CD4-positive, alpha-beta memory T cell (primary cell): ENCODE measurements at regions of chr20 and their contacts with region 1.

Region 1: DNA sequence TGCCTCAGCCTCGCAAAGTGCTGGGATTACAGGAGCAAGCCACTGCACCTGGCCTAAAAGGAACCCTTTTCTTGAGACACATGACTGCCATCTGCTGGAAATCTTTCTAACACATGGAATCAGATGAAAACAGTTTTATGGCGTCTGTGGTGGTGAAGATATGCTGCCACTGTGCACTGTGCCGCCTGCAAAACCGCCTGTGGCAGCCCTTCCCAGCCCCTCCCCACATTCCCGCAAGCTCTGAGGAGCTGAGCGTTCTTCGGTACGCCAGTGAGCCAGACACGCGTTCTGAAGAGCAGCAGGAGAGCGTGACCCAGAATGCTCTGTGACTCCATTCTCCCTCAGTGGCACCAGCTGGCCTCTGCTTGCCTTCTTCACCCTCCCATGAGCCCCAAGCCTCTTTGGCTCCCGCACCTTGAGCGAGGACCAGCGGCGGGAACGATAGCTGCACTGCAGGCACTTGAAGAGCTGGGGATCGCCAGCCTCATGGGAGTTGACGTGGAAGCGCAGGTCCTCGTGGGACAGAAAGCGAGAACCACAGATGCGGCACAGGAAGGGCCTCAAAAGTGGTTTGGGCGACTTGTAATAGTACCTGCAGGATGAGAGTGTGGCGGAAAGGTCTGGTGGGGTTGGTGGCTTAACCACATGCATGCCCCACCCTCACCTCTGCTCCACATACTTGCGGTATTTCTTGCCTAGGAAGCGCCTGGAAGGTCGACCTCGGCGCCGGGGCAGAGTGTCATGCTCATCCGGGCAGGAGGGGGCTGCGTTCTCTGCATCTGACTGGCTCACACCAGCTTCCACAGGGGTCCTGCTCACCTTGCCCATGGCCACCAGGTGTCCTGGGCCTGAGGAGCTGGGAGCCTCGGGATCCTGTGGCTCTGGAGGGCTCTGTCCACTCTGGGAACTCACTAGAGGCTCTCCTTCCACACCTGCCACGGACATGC is 8.7 kb downstream of the ZNF335 start:
- DNase-seq: peak in 4 of 5 donors; percentile 33 to 51 (median 36)
- H3K4me3 ChIP-seq: no peak overlapping the region
- H3K4me3 Mint-ChIP-seq: peak overlapping the region in 4 of 8 donors; percentile 56 to 64 (median 60)
- H3K27ac ChIP-seq: no peak overlapping the region
- H3K27ac Mint-ChIP-seq: peak overlapping the region; percentile 53 to 87 (median 61)
- H3K4me1 ChIP-seq: no peaks in the 10 kb centered on the region
- H3K4me1 Mint-ChIP-seq: peaks cover 0 to 11% (median 4%) of the 10 kb centered on the region in 4 donors
- H3K27me3 ChIP-seq: no peaks in the 10 kb centered on the region
- H3K27me3 Mint-ChIP-seq: no peaks in the 10 kb centered on the region

Region 2: GRCh38 chr20:45823949-45824835 is 139.1 kb before region 1 on chr20:
- CTCF ChIA-PET with region 1: interaction called, 7 read pairs
- POLR2A ChIA-PET with region 1: no interaction called
- intact Hi-C with region 1: loop called (anchors 1 kb)
- DNase-seq: peak; percentile 37 to 58 (median 47)
- H3K4me3 ChIP-seq: peak overlapping the region in 1 of 2 donors; percentile 46
- H3K4me3 Mint-ChIP-seq: peak overlapping the region; percentile 64 to 84 (median 80)
- H3K27ac ChIP-seq: no peak overlapping the region
- H3K27ac Mint-ChIP-seq: peak overlapping the region in 6 of 7 donors; percentile 2 to 86 (median 66)
- H3K4me1 ChIP-seq: peaks cover 7% of the 10 kb centered on the region
- H3K4me1 Mint-ChIP-seq: peaks cover 7 to 22% (median 15%) of the 10 kb centered on the region in 4 donors
- H3K27me3 ChIP-seq: no peaks in the 10 kb centered on the region
- H3K27me3 Mint-ChIP-seq: peaks cover 6 to 19% of the 10 kb centered on the region in 2 donors

Region 3: DNA sequence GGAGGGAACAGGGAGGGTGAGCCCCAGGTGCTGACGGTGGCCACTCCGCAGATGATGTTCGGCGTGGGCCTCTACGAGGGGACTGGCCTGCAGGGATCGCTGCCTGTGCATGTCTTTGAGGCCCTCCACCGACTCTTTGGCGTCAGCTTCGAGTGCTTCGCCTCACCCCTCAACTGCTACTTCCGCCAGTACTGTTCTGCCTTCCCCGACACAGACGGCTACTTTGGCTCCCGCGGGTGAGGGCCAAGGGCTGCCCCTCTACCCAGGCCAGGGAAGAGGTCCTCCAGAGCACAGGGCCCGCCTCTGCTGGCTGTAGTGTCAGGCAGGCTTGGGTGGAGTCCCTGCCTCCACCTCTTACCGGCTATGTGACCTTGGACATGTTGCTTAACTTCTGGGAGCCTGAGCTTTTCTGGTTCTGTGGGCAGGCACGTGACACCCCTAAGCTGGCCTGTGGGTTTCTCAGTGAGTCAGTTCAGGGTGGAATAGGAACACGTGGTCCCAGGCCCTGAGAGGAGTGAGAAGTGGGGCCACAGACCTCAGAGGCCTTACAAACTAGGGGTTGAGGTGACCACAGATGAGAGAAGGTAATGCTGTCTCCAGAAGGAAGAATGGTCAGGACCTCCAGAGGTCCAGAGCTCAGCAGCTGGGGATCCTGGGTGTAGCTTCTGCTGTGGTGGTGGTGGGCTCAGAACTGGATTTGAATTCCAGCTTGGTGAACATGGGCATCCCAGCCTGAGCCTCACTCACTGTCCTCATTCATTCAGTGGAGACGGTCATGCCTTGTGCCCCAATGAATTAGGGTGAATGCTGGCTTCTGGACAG is 17.0 kb before region 1 on chr20:
- CTCF ChIA-PET with region 1: interaction called, 23 read pairs
- POLR2A ChIA-PET with region 1: interaction called, 141 read pairs
- intact Hi-C with region 1: no loop called
- DNase-seq: peak in 3 of 5 donors; percentile 21 to 66 (median 30)
- H3K4me3 ChIP-seq: no peak overlapping the region
- H3K4me3 Mint-ChIP-seq: no peak overlapping the region
- H3K27ac ChIP-seq: no peak overlapping the region
- H3K27ac Mint-ChIP-seq: peak overlapping the region in 4 of 7 donors; percentile 48 to 74 (median 72)
- H3K4me1 ChIP-seq: peaks cover 3% of the 10 kb centered on the region
- H3K4me1 Mint-ChIP-seq: peaks cover 2 to 22% (median 14%) of the 10 kb centered on the region in 4 donors
- H3K27me3 ChIP-seq: no peaks in the 10 kb centered on the region
- H3K27me3 Mint-ChIP-seq: no peaks in the 10 kb centered on the region

Region 4: GRCh38 chr20:46087161-46087560 is 123.8 kb after region 1 on chr20:
- CTCF ChIA-PET with region 1: no interaction called
- POLR2A ChIA-PET with region 1: no interaction called
- intact Hi-C with region 1: no loop called
- DNase-seq: no peak
- H3K4me3 ChIP-seq: no peak overlapping the region
- H3K4me3 Mint-ChIP-seq: peak overlapping the region in 7 of 8 donors; percentile 17 to 89 (median 61)
- H3K27ac ChIP-seq: no peak overlapping the region
- H3K27ac Mint-ChIP-seq: peak overlapping the region in 2 of 7 donors; percentile 41 to 49
- H3K4me1 ChIP-seq: peaks cover 74% of the 10 kb centered on the region
- H3K4me1 Mint-ChIP-seq: peaks cover 49 to 80% (median 66%) of the 10 kb centered on the region in 4 donors
- H3K27me3 ChIP-seq: no peaks in the 10 kb centered on the region
- H3K27me3 Mint-ChIP-seq: no peaks in the 10 kb centered on the region